Activated CD8-positive, alpha-beta T cell treated with anti-CD3 and anti-CD28 coated beads, Interleukin-2, amount 10 ng/mL, durations not matched to agents 7 days and 5 days (primary cell): ENCODE measurements at regions of chr1 and their contacts with region 1.

Region 1: DNA sequence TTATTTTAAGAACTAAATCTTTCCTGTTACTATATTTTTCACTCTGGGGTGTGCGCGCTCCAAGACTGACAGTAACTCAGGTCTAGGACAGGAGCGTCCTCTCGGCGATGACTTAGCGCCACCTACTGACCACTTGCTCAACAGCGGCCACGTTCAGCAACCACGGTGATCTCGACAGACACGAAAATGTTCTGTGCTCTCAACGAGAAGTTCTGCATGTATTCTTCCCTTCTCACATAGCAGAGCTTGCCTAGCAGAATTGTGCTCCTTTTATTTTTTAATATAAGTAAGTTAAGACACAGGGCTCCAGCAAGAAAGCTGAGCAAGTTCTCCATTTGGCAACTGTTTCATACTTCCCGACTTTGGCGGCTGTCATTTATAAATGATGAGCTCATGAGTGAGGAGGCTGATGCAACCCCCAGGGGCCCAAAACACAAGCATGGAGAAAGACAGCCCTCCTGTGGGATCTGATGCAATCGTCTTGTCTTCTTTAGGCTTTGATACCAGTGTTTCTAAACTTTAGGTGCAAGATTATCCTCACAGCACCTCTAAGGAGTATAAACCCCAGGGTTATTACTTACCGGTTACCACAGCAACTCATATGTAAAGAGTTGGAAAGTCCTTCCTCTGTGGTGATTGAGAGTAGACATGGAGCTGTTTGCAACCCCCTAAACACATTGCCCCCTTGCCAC is 92.6 kb downstream of the HHIPL2 start:
- DNase-seq: peak; percentile 87
- ATAC-seq: peak; percentile 98
- H3K4me3 Mint-ChIP-seq: no peak overlapping the region
- H3K27ac Mint-ChIP-seq: no peak overlapping the region
- H3K4me1 Mint-ChIP-seq: peaks cover 6% of the 10 kb centered on the region
- H3K27me3 Mint-ChIP-seq: no peaks in the 10 kb centered on the region

Region 2: GRCh38 chr1:221478050-221478949 is 977.0 kb before region 1 on chr1:
- CTCF ChIA-PET with region 1: interaction called, 15 read pairs
- POLR2A ChIA-PET with region 1: no interaction called
- DNase-seq: peak; percentile 59
- ATAC-seq: peak; percentile 84
- H3K4me3 Mint-ChIP-seq: no peak overlapping the region
- H3K27ac Mint-ChIP-seq: no peak overlapping the region
- H3K4me1 Mint-ChIP-seq: no peaks in the 10 kb centered on the region
- H3K27me3 Mint-ChIP-seq: peaks cover 2% of the 10 kb centered on the region

Region 3: GRCh38 chr1:222095606-222096475 is 359.5 kb before region 1 on chr1:
- CTCF ChIA-PET with region 1: interaction called, 34 read pairs
- POLR2A ChIA-PET with region 1: no interaction called
- DNase-seq: peak; percentile 64
- ATAC-seq: peak; percentile 73
- H3K4me3 Mint-ChIP-seq: no peak overlapping the region
- H3K27ac Mint-ChIP-seq: no peak overlapping the region
- H3K4me1 Mint-ChIP-seq: no peaks in the 10 kb centered on the region
- H3K27me3 Mint-ChIP-seq: no peaks in the 10 kb centered on the region

Region 4: GRCh38 chr1:222420633-222421032 is 34.7 kb before region 1 on chr1:
- CTCF ChIA-PET with region 1: interaction called, 10 read pairs
- POLR2A ChIA-PET with region 1: no interaction called
- DNase-seq: peak; percentile 60
- ATAC-seq: peak; percentile 88
- H3K4me3 Mint-ChIP-seq: peak overlapping the region; percentile 40
- H3K27ac Mint-ChIP-seq: peak overlapping the region; percentile 74
- H3K4me1 Mint-ChIP-seq: peaks cover 36% of the 10 kb centered on the region
- H3K27me3 Mint-ChIP-seq: no peaks in the 10 kb centered on the region

Region 5: GRCh38 chr1:222443566-222443965 is 11.8 kb before region 1 on chr1:
- CTCF ChIA-PET with region 1: interaction called, 18 read pairs
- POLR2A ChIA-PET with region 1: no interaction called
- DNase-seq: no peak
- ATAC-seq: no peak
- H3K4me3 Mint-ChIP-seq: no peak overlapping the region
- H3K27ac Mint-ChIP-seq: no peak overlapping the region
- H3K4me1 Mint-ChIP-seq: no peaks in the 10 kb centered on the region
- H3K27me3 Mint-ChIP-seq: no peaks in the 10 kb centered on the region

Region 6: DNA sequence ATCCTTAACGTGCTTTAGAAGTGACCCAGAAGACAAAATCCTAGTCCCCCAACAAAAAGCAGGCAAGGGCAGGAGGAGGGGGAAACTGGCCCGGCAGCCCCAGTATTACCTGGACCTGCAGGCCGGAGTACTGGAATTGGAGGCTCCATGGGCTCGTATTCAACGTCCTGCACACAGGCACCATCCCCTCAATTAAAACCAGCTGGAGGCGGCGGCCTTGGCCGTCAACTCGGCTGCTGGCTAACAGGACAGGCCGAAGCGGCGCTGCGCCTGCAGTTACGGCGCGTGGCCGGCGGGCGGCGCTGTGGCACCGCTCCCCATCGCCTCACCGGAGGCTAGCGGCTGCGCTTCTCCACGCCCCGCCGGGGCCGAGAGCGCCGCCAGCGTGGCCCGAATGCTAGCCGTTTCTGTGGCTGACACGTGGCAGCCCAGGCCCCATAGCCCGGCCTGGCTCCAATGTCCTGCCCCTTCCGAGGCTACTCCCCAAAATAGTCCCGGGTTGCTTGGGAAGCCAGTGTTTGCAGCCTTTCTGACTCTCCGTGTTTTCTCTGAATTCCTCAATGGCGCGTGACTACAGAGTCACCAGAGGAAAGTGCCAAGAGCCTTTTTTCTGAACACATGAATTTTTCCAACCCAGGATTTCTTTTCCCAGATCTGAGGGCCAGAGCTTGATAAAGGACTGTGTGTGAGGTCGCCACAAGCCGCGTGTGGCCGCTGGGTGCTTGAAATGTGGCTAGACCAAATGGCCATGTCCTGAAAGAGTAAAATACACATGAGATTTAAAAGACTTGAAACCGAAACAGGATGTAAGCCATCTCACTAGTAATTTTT is 10.1 kb after region 1 on chr1:
- CTCF ChIA-PET with region 1: interaction called, 20 read pairs
- POLR2A ChIA-PET with region 1: no interaction called
- DNase-seq: peak; percentile 83
- ATAC-seq: peak; percentile 96
- H3K4me3 Mint-ChIP-seq: peak overlapping the region; percentile 73
- H3K27ac Mint-ChIP-seq: peak overlapping the region; percentile 87
- H3K4me1 Mint-ChIP-seq: peaks cover 13% of the 10 kb centered on the region
- H3K27me3 Mint-ChIP-seq: peaks cover 6% of the 10 kb centered on the region